Astrocyte of the cerebellum (primary cell): ENCODE measurements at regions of chr2 and their contacts with region 1.

Region 1: DNA sequence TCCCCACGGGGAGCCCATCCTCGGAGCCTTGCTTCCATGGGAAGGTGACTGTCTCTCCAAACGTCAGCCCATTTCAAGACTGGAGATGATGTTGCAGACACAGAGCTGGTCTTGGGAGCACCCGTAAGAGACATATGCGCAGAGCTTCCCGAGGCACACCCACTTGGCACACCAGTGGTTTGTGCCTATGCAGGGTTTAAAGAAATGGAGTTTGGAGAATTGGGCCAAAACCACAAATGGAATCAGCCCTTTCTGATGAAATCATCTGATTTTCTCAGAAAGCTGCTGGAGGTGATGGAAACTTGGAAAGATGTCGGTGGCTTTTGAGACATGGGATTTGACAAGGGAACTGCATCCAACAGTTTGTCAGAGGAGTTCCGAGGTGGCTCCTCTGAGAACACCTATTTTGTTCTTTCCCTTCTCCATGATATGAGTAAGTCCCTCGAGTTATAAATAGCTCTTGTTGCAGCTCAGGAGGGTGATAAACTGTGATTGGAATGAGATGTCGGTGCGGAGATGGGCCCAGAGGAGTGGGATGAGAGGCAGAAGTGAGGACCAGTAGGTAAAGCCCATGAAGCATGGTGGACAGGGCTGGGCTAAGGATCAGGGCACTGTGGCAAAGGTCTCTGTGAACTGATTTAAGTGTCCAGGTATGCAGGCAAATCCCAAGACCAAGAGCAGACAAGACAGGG is 225.7 kb downstream of the ACKR3 start:
- DNase-seq: no peak
- H3K4me3 ChIP-seq: no peak overlapping the region
- CTCF ChIP-seq: no peak

Region 2: DNA sequence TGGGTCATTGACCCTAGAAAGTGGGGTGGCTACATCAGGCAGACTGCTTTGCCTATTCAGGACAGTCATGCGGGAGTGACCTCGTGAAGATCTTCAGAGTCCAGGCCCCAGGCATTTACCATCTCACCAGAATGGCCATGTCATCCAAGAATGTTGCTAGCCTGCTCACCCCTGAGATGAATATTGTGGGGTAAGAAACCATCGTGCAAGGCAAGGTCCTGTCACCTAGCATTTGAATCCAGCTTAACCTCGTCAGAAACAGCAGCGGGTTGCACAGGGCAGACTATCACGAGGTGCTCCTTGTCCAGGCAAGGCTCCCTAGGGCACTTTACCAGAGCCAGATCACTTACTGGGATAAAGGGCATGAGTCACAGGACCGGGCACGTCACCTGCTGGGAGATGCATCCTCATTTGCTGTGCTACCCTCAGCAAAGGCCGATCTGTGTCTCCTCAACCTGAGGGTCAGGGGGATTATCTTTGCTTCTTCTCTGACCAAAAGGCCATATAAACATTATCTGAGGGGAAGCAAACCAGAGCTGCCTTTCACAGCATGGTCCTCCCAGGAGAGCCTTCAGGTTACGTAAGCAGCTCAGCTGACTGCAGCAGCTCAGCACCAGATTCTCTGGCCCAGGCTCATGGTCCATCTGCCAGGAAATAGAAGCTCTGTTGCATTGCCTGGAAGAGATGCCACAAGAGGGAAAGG is 63.3 kb before region 1 on chr2:
- in situ Hi-C with region 1: no loop called
- DNase-seq: no peak
- H3K4me3 ChIP-seq: no peak overlapping the region
- CTCF ChIP-seq: no peak

Region 3: GRCh38 chr2:236882931-236883330 is 87.6 kb after region 1 on chr2:
- in situ Hi-C with region 1: loop called (anchors 5 kb)
- DNase-seq: no peak
- H3K4me3 ChIP-seq: no peak overlapping the region
- CTCF ChIP-seq: no peak